ENCODE measurements at regions of chr2 and their contacts with region 1.

Region 1: GRCh38 chr2:58046585-58047372 is at the start of gene VRK2:
- DNase-seq: peak; percentile 87
- ATAC-seq: peak; percentile 91
- H3K4me3 Mint-ChIP-seq: peak within 1 kb of the TSS; percentile 91
- H3K27ac Mint-ChIP-seq: peak within 1 kb of the TSS; percentile 95
- H3K4me1 Mint-ChIP-seq: peaks cover 51% of the 10 kb centered on the region
- H3K27me3 Mint-ChIP-seq: no peaks in the 10 kb centered on the region
- CTCF ChIP-seq: no peak
- total RNA-seq, gene VRK2: 60.0 and 63.0 TPM in 2 replicates

Region 2: DNA sequence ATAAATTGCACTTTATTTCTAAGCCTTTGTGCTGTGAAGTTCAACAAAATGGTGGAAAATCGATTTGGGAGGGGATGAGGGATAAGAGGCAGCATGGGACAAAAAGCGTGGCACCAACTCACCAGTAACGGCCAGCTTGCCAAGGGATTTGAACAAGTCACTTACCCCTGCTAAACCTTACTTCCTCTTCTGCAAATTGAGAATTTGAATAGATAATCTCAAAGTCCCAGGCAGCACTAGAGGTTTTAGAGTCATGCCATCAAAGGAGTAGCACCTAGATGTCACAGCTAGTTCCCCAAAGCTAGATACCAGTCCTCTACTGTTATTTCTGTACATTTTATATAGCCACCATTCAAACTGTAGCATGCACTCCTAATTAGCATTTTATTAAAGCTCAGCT is 83.9 kb before region 1 on chr2:
- CTCF ChIA-PET with region 1: no interaction called
- POLR2A ChIA-PET with region 1: interaction called, 4 read pairs
- intact Hi-C with region 1: loop called (anchors 2 kb)
- DNase-seq: no peak
- ATAC-seq: peak; percentile 42
- H3K4me3 Mint-ChIP-seq: no peak overlapping the region
- H3K27ac Mint-ChIP-seq: no peak overlapping the region
- H3K4me1 Mint-ChIP-seq: peaks cover 8% of the 10 kb centered on the region
- H3K27me3 Mint-ChIP-seq: no peaks in the 10 kb centered on the region
- CTCF ChIP-seq: no peak

Region 3: DNA sequence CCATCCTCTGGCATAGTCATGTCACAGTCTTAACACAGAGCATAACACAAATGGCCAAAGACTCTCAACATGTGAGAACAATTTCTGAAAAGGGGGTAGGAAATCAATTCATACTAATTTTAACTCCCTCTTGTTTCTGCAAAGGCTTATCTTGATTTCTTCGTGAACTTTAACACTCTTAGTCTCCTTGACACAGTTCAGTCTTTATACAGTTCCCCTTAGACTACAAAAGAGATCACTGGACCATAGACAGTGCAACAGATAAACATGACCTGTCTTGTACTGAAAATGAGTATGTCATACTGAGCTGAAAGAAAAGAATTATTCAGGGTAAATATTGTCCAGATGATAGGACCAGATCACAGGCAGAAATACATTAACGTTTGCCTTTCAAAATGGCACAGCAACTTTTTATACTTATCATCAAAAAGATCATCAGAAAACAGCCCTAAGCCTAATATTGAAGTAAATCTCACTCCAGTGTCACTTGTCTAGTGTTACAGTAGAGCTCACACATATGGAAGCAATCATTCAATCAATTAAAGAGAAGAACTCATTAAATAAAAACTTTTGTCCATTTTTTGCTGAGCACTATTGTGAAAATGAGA is 56.6 kb before region 1 on chr2:
- CTCF ChIA-PET with region 1: no interaction called
- POLR2A ChIA-PET with region 1: interaction called, 3 read pairs
- intact Hi-C with region 1: loop called (anchors 5 kb)
- DNase-seq: no peak
- ATAC-seq: no peak
- H3K4me3 Mint-ChIP-seq: no peak overlapping the region
- H3K27ac Mint-ChIP-seq: no peak overlapping the region
- H3K4me1 Mint-ChIP-seq: peaks cover 7% of the 10 kb centered on the region
- H3K27me3 Mint-ChIP-seq: no peaks in the 10 kb centered on the region
- CTCF ChIP-seq: no peak

Region 4: DNA sequence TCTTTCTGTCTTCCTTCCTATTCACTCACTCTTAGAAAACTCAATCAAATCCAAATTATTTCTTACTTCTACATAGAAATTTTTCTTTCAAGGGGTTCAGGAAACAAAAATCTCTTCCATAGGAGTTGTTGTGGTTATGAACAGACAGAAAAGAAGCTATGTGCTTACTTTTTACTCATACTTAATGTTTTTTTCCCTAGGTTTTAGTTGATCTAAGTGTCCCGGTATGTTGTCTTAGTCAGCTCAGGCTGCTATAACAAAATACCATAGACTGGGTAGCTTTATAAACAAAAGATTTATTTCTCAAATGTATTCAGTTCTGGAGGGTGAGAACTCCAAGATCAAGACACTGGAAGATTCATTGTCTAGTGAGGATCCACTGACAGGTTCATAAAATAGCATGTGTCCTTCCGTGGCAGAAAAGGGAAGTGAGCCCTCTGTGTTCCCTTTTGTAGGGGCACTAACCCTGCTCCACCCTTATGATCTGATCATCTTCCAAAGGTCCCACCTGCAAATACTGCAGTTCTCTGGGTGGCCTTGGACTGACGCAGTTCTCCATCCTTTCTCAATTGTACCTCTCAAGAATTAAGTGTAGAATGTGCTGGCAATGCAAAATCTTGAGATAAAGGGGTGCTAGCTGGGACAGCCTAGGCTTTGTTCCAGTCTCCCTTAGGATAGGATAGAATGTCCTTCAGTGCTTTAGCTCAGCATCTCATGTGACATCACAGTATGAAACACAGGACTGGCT is 14.6 kb before region 1 on chr2:
- CTCF ChIA-PET with region 1: interaction called, 7 read pairs
- POLR2A ChIA-PET with region 1: interaction called, 83 read pairs
- intact Hi-C with region 1: loop called (anchors 1 kb)
- DNase-seq: no peak
- ATAC-seq: peak; percentile 85
- H3K4me3 Mint-ChIP-seq: peak overlapping the region; percentile 16
- H3K27ac Mint-ChIP-seq: peak overlapping the region; percentile 59
- H3K4me1 Mint-ChIP-seq: peaks cover 55% of the 10 kb centered on the region
- H3K27me3 Mint-ChIP-seq: no peaks in the 10 kb centered on the region
- CTCF ChIP-seq: no peak

Region 5: GRCh38 chr2:58240670-58241545 is 194.1 kb after region 1 on chr2 and contains the start of gene FANCL:
- CTCF ChIA-PET with region 1: interaction called, 3 read pairs
- POLR2A ChIA-PET with region 1: interaction called, 5 read pairs
- intact Hi-C with region 1: loop called (anchors 2 kb)
- DNase-seq: peak; percentile 71
- ATAC-seq: peak; percentile 84
- H3K4me3 Mint-ChIP-seq: peak within 1 kb of the TSS; percentile 92
- H3K27ac Mint-ChIP-seq: peak within 1 kb of the TSS; percentile 86
- H3K4me1 Mint-ChIP-seq: peaks cover 36% of the 10 kb centered on the region
- H3K27me3 Mint-ChIP-seq: no peaks in the 10 kb centered on the region
- CTCF ChIP-seq: no peak
- total RNA-seq, gene FANCL: 17.8 and 18.4 TPM in 2 replicates